ENCODE measurements at regions of chr1 and their contacts with region 1.

Region 1: DNA sequence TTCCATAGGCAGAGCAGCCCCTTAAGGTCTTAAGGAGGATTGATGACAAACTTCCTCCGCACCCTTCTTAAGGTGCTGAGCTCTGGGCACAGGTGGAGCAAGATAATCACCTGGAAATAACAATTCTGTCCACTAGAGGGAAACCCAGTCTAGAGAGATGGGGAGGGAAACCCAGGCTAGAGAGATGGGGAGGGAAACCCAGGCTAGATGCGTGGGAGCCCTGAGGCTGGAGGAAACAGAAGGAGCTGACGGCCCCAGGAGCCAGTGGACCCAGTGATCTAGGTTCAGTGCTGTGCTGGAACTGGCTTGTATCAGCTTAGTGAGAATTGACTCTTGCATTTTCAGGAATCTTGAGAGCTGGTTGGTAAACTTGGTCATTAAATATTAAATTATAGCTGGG is 17.8 kb upstream of the MYCL start:
- DNase-seq: peak; percentile 87
- H3K27ac ChIP-seq: peak overlapping the region; percentile 9; the same call in 1 of the 2 replicates
- CTCF ChIP-seq: peak; percentile 78

Region 2: GRCh38 chr1:39808784-39809517 is 110.6 kb before region 1 on chr1:
- CTCF ChIA-PET with region 1: no interaction called
- POLR2A ChIA-PET with region 1: no interaction called
- DNase-seq: no peak
- H3K27ac ChIP-seq: no peak overlapping the region
- CTCF ChIP-seq: no peak

Region 3: DNA sequence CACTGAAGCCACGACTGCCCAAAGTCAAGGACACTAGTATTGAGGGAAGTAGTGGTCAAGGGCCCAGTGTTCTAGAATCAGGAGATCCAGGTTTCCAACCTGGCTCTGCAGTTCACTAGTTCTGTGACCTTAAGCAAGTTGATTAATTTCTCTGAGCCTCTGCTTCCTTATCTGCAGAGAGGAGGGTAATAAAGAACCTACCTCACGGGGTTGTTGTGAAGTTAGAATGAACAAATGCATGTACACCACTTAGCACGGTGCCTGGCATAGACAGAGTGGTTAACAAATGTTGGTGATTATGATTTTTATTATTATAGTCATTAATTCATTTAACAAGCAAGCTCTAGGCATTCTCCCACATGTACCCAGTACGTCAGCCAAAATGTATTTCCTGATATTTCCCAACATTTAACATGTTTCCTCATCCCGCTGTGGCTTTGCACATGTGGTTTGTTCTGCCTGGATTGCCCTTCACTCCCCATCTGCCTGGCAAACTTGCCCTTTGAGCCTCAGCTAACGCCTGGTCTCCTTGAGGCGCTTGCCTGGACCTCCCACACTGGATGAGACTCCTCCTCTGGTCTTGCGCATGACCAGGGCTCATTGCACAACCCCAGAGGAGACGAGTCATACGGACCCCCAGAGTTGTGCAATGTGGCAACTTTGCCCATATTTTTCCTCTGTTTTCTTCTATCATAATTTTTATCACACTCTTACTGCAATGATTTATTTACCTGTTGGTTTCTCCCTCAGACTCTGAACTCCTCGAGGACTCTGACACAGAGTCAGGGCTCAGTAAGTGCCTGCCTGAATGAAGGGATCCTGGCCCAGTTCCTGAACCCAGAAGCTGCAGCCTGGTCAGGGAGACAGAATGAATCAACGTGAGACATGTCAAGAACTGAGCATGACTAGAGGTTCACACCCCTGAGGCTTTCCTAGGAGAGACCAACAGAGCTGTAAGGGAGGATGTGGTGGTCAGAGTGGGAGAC is 14.7 kb after region 1 on chr1:
- CTCF ChIA-PET with region 1: interaction called, 17 read pairs
- POLR2A ChIA-PET with region 1: interaction called, 3 read pairs
- DNase-seq: peak; percentile 91
- H3K27ac ChIP-seq: peak overlapping the region; percentile 98
- CTCF ChIP-seq: no peak

Region 4: DNA sequence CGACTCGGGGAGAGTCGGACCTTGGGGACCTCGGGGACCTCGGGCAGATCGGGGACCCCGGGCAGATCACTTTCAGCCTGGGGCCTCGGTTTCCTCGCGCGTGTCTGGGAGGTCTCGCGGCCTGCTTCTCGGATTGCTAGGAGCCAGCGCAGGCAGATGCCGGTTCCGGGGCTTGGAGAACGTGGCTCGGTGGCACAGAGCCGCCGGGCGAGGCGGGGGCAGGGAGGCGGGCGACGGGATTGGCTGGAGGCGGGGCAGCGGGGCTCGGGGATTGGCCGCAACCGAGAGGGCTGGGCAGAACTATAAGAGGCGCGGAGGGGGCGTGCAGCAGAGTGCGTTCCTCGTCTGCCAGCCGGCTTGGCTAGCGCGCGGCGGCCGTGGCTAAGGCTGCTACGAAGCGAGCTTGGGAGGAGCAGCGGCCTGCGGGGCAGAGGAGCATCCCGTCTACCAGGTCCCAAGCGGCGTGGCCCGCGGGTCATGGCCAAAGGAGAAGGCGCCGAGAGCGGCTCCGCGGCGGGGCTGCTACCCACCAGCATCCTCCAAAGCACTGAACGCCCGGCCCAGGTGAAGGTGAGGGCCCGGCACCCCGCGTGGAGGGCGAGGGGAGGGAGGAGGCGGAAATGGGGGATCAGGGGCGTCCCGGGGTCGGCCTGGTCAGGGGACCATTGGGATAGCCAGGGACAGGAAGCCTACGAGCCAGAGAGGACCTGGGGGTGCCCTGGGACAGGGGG is 35.4 kb after region 1 on chr1 and contains the start of gene MFSD2A:
- CTCF ChIA-PET with region 1: interaction called, 13 read pairs
- POLR2A ChIA-PET with region 1: no interaction called
- DNase-seq: peak; percentile 95
- H3K27ac ChIP-seq: peak within 1 kb of the TSS; percentile 93
- CTCF ChIP-seq: no peak

Region 5: GRCh38 chr1:39973503-39974135 is 54.1 kb after region 1 on chr1:
- CTCF ChIA-PET with region 1: interaction called, 111 read pairs
- POLR2A ChIA-PET with region 1: interaction called, 3 read pairs
- DNase-seq: peak; percentile 71
- H3K27ac ChIP-seq: peak overlapping the region; percentile 99
- CTCF ChIP-seq: peak; percentile 97

Region 6: GRCh38 chr1:39995973-39996393 is 76.4 kb after region 1 on chr1:
- CTCF ChIA-PET with region 1: no interaction called
- POLR2A ChIA-PET with region 1: no interaction called
- DNase-seq: no peak
- H3K27ac ChIP-seq: no peak overlapping the region
- CTCF ChIP-seq: no peak

Region 7: GRCh38 chr1:40032240-40032891 is 112.8 kb after region 1 on chr1:
- CTCF ChIA-PET with region 1: interaction called, 21 read pairs
- POLR2A ChIA-PET with region 1: no interaction called
- DNase-seq: peak; percentile 45
- H3K27ac ChIP-seq: no peak overlapping the region
- CTCF ChIP-seq: peak; percentile 83

Measured in RWPE1 (cell line).